ENCODE measurements at regions of chr19 and their contacts with region 1.

Region 1: DNA sequence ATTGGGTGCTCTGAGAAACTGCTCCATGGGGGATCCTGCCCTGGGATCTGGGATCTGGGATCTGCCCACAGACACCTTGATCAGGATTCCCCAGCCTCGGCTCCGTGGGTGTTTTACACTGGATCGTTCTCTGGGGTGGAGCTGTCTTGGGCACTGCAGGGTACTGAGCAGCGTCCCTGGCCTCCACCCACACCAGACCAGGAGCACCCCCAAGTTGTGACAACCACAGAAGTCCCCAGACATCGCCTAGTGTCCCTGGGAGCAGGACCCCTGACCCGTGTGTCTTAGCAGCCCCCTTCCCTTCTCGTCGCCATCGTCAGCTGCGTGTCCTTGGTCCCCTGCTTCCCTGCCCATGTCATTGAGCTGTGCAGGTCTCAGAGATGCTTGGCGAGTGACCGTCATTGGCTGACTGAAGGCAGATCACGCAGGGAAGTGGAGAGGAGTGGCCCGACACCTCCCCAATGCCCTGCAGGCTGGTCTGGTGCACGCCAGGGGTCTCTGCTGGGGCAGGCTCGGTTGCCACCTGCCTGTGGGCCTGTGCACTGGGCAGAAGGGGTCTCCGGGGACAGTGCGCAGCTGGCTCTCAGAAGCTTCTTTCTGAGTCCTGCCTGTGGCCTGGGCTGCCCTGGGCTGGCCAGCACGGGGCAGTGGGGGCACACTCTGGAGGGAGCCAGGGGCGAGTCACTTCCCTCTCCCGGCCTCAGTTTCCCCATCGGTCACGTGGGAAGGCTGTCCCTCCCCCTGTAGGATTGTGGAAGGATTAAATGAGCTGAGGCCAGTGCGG is 6.1 kb downstream of the GNA11 start:
- DNase-seq: no peak
- ATAC-seq: no peak
- H3K4me3 ChIP-seq: no peak overlapping the region
- H3K27ac ChIP-seq: no peak overlapping the region
- H3K4me1 ChIP-seq: peaks cover 22% of the 10 kb centered on the region
- H3K27me3 ChIP-seq: no peaks in the 10 kb centered on the region
- CTCF ChIP-seq: no peak
- POLR2A ChIP-seq: no peak
- RAD21 ChIP-seq: no peak

Region 2: GRCh38 chr19:2962045-2962561 is 138.2 kb before region 1 on chr19:
- CTCF ChIA-PET with region 1: no interaction called
- POLR2A ChIA-PET with region 1: no interaction called
- dilution Hi-C with region 1: no loop called
- in situ Hi-C with region 1: no loop called
- intact Hi-C with region 1: loop called (anchors 1 kb)
- DNase-seq: peak; percentile 89
- ATAC-seq: peak; percentile 99
- H3K4me3 ChIP-seq: peak overlapping the region; percentile 14; the same call in 1 of the 2 replicates
- H3K27ac ChIP-seq: no peak overlapping the region
- H3K4me1 ChIP-seq: no peaks in the 10 kb centered on the region
- H3K27me3 ChIP-seq: peaks cover 3% of the 10 kb centered on the region
- CTCF ChIP-seq: peak; percentile 95
- POLR2A ChIP-seq: no peak
- RAD21 ChIP-seq: peak; percentile 85